GM18951 (cell line): ENCODE measurements at regions of chr4 and their contacts with region 1.

Region 1: GRCh38 chr4:136599890-136600289 is 932.4 kb downstream of the PCDH18 start:
- POLR2A ChIP-seq: no peak

Region 2: DNA sequence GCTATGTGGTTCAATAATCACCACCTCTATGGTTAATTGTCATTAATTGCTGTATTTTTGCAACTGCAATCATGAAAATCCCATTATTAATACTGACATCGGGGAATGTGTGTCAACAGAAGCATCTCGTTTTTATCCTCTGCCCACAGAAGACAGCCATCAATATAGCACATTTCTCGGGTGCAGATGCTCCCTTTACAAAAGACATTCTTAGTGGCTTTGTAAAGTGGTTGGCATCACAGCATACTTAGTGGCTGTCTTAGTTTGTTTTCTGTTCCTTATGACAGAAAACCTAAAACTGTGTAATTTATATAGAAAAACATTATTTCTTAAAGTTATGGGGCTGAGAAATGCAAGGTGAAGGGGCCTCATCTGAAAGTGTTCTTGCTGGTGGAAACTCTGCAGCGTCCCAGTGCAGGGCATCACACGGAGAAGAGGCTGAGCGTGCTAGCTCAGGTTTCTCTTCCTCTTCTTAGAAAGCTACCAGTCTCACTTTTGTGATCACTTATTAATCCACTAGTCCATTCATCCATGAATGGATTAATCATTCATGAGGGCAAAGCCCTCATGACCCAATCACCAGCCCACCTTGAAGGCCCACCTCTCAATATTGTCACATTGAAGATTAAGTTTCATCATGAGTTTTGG is 1330.6 kb before region 1 on chr4:
- in situ Hi-C with region 1: loop called (anchors 25 kb)
- POLR2A ChIP-seq: no peak

Region 3: GRCh38 chr4:136227315-136227714 is 372.6 kb before region 1 on chr4:
- in situ Hi-C with region 1: no loop called
- POLR2A ChIP-seq: no peak

Region 4: GRCh38 chr4:136302566-136302965 is 297.3 kb before region 1 on chr4:
- in situ Hi-C with region 1: no loop called
- POLR2A ChIP-seq: no peak